ENCODE measurements at regions of chr9 and their contacts with region 1.

Region 1: DNA sequence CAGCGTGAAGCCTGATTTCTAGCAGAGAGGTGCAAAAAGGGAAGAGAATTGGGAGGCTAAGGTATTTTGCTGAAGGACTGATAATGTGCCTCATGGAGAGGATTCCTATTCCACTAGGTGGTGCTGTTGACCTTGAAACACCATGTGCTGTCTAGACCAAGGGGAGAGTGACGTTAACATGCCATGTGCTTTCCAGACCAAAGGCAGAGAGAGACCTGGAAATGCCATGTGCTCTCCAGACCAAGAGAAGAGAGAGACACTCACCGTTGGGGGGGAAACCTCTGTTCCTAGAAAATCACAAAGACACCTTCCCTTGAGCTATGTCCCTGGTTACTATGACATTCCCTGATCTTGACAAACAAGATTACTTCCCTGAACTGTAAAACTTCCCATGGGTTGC is 286.0 kb upstream of the TUSC1 start:
- DNase-seq: no peak
- H3K4me3 ChIP-seq: no peak overlapping the region
- H3K27ac ChIP-seq: no peak overlapping the region
- H3K27me3 ChIP-seq: no peaks in the 10 kb centered on the region
- CTCF ChIP-seq: peak in 55 of 56 donors; percentile 12 to 73 (median 53)

Region 2: GRCh38 chr9:26326473-26327044 is 362.3 kb after region 1 on chr9:
- intact Hi-C with region 1: loop called (anchors 2 to 10 kb)
- DNase-seq: peak in 5 of 10 donors; percentile 7 to 43 (median 34)
- H3K4me3 ChIP-seq: no peak overlapping the region
- H3K27ac ChIP-seq: peak overlapping the region in 2 of 59 donors; percentile 27 to 32
- H3K27me3 ChIP-seq: no peaks in the 10 kb centered on the region
- CTCF ChIP-seq: peak; percentile 72 to 96 (median 87)

Region 3: DNA sequence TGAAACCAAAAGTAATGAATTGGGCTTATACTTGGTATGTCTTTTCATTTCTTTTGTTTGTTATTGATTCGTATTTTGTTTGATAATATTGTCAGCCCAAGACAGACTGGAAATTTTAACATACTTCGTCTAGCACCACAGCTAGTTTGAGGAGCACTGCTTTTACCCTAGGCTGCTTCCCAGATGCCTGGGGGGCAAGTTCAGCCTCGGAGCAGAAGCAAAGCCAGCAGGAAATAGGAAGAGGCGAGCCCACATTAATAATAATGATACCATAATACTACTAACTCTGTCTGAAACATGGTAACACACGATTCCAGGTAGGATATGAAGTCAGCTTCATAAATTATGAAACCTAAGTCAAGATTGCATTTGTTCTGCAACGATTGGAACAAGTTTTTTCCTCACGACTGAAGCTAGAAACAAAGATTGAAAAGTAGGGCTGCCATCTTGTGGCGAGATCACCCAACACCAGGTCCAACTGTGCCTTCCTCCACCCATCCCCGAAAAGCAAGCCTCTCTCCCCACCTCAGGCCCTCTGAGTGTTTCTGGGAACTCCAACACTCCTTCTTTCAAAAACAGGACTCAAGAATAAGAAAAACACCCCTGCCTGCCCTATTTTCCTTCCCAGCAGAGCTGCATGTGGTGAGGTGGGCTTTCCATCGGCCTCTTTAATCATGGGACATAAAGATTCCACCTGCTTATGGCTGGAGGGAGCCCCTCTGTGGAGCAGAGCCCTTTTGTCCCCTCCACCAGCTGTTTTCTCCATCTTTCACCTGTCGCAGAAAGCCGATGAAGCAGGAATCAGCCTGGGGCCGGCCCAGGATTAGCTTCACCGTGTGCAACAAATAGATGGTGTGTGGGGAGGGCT is 692.0 kb after region 1 on chr9:
- intact Hi-C with region 1: loop called in 1 of 2 experiments (anchors 5 kb)
- DNase-seq: peak in 6 of 10 donors; percentile 7 to 56 (median 41)
- H3K4me3 ChIP-seq: peak overlapping the region in 29 of 59 donors; percentile 8 to 56 (median 34)
- H3K27ac ChIP-seq: no peak overlapping the region
- H3K27me3 ChIP-seq: peaks cover 0 to 34% (median 0%) of the 10 kb centered on the region in 45 donors
- CTCF ChIP-seq: peak in 54 of 56 donors; percentile 34 to 75 (median 60)

Measured in dorsolateral prefrontal cortex (tissue), 120 donors.